ENCODE measurements at regions of chr2 and their contacts with region 1.

Region 1: DNA sequence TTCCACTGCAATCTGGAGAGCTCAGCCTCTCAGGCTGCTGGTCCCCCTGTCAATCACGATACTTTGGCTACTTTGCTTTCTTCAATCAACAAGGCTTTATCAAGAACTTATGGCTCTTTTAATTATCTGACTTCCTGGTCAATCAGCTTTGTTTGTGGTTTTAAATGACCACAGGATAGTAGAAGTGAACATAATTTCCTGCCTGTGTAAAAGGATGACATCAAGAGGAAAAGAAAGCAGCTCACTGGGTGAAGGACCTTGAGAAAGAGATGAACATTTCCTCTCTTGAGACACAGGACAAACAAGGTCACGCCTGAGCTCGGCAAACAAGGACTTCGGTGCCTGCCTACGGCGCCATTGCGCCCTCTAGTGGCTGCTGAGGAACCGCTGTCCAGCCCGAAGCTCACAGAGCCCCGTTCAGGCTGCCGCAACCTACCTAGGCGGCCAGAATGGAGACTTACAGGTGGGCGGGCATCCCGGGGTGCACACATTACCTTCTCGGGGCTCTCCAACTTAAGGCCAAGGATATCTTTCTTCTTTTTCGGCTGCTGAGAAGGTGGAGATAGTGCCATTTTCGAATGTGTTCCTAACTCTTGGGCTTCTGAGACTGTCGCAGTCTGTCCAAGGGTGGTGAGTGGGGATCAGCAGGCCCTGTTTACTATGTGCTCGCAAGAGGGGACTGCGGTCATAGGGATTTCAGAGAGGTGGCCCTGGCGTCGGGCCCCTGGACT is 54.0 kb downstream of the IL1RL2 start:
- DNase-seq: peak; percentile 92
- H3K4me3 ChIP-seq: no peak overlapping the region
- CTCF ChIP-seq: peak; percentile 99

Region 2: GRCh38 chr2:101644842-101645383 is 595.9 kb before region 1 on chr2:
- CTCF ChIA-PET with region 1: no interaction called
- POLR2A ChIA-PET with region 1: no interaction called
- DNase-seq: no peak
- H3K4me3 ChIP-seq: no peak overlapping the region
- CTCF ChIP-seq: no peak

Region 3: DNA sequence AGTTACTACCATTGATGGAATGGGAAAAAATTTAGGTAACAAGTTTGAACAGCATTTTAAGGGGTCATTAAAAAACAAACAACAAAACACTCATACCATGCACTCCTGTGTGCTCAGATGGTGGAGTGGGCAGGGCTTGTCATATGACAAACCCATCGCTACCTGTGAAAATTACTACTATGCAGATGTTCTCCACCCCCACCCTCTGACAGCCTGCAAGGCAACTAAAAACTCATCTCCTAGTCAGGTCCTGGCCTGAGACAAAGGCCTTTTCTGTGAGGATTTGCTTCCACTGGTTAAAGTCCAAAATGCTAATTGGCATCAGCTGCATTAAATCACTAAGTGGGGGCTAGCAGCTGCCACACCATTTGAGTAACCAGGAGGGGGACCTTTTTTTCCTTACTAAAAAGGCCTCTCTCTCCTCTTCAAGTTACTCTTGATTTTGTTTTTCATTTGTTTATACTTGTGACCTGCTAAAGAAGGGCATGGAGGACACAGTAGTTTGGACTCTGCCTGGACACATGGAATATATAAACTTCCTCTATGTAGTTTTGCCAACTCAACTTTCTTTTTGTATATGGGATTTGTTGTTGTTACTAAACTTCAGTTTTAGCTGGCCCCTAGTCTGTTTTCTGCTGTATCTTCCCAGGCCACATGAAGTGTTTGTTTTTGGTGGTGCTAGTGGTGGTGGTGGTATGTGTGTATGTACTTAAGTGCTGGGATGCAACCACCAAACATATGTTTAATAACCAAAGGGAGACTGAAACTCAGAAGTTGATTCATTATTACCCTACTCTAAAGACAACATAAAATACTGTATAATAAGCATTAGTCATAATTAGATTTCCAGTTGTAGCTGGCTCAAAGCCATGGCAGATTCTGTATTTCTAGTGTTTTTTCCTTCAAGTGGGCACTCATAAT is 422.0 kb before region 1 on chr2:
- CTCF ChIA-PET with region 1: no interaction called
- POLR2A ChIA-PET with region 1: no interaction called
- DNase-seq: peak; percentile 65
- H3K4me3 ChIP-seq: no peak overlapping the region
- CTCF ChIP-seq: no peak

Region 4: DNA sequence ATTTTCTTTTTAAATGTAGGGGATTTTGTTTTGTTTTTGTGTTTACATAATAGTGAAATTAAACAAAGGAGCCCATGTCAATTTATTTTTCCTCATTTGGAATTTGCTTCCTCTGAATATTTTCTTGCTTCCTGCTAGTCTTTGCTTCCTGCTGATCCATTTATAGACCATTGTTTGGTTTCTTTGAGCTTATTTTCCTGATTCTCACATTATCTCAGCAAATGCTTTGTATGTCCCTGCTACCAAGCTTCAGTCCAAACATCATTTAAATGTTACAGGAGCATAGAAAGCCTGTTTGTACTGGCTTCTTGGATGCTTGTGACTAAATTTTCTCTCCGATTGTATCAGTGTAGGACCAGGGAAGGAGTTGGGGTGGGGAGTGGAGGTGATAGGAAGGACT is 376.4 kb before region 1 on chr2:
- CTCF ChIA-PET with region 1: no interaction called
- POLR2A ChIA-PET with region 1: no interaction called
- DNase-seq: no peak
- H3K4me3 ChIP-seq: no peak overlapping the region
- CTCF ChIP-seq: no peak

Region 5: DNA sequence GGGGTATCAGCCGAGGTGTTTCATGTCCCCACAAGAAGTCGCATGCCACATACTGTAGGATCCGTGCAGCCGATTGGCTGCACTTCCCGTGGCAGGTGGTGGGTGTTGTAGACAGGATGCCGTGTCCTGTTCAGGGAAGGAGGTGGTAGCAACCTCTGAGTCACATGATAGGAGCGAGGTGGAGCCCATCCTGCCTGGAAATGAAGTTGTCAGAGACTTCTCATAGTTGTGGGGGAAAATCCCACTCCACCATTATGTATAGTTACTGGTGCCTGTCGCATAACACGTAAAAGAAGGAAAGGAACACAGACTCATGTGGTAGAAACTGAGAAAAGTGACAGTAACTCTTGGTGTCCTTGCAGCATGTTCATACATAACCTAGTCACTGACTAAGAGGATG is 340.4 kb before region 1 on chr2:
- CTCF ChIA-PET with region 1: interaction called, 10 read pairs
- POLR2A ChIA-PET with region 1: no interaction called
- DNase-seq: no peak
- H3K4me3 ChIP-seq: no peak overlapping the region
- CTCF ChIP-seq: no peak

Region 6: DNA sequence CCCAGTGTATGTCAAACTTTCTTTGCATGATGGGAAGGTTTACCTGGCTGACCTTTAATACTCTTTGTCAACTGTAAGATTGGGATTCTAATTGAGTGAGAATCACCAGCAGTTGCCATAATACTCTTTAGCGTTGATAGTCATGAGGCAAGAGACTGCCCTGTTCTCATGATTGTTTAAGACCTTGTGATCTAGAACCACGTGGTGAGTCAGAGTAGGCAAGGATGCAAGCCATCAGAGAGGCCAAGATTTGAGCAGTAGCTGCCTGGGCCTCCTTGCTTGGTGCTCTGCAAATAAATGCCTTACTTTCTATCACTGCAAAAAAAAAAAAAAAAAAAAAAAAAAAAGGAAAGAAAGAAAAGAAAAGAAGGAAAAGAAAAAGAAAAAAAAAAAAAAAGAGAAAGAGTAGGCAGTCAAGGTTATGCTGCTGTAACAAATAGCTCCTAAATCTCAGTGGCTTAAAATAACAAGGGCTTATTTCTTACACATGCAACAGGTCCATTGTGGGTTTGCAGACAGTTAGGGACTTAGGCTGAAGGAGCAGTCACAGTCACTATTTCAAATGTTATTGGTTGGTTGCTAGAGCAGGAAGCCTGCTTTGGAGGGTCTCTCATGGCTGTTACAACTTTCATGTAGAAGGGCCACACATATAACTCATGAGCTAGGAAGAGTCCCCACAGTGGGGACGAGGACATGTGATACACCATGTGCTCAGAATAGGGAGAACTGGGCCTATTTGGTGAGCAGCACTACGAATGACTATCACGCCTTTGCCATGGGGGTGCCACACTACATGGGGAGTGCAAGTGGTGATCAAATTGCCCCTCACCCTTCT is 227.4 kb before region 1 on chr2:
- CTCF ChIA-PET with region 1: interaction called, 145 read pairs
- POLR2A ChIA-PET with region 1: no interaction called
- DNase-seq: no peak
- H3K4me3 ChIP-seq: no peak overlapping the region
- CTCF ChIP-seq: no peak

Region 7: DNA sequence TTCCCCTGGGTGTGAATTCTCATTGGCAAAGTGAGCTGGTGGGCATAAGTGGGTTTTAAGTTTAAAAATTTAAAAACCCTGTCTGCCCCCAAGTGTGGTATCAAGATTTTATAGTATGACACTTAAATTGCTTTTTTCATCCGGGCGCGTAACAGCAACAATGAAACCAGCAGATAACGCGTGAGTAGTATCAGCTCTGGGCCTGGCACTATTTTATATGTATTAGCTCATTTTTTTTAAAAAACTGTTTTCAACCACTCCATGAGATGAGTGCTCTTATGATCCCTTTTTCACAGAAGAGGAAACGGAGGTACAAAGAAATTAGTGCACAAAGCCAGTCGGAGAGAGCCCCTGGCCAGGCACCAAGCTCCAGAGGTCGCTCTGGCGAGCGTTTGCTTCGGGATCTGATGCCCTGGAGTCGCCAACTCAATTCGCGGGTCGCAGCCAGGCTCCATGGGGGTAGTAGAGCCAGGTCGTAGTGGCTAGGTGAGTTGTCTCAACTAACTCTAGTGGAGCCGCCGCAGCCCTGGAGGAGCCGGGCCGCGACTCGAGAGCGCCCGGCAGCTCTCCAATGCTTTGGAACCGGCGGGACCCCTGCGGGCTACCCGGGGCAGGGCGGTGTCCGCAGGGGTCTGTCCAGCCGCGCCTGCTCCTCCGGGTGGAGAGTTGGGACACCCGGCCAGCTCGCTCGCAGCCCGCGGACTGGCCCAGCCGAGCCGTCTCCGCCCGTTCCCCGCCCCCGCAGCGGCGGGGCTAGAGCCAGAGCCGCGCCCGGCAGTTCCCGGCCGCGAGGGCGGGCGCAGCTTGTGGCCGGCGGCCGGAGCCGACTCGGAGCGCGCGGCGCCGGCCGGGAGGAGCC is 98.6 kb before region 1 on chr2 and contains the start of gene IL1R1:
- CTCF ChIA-PET with region 1: interaction called, 19 read pairs
- POLR2A ChIA-PET with region 1: no interaction called
- DNase-seq: no peak
- H3K4me3 ChIP-seq: peak within 1 kb of the TSS; percentile 69
- CTCF ChIP-seq: no peak

Region 8: DNA sequence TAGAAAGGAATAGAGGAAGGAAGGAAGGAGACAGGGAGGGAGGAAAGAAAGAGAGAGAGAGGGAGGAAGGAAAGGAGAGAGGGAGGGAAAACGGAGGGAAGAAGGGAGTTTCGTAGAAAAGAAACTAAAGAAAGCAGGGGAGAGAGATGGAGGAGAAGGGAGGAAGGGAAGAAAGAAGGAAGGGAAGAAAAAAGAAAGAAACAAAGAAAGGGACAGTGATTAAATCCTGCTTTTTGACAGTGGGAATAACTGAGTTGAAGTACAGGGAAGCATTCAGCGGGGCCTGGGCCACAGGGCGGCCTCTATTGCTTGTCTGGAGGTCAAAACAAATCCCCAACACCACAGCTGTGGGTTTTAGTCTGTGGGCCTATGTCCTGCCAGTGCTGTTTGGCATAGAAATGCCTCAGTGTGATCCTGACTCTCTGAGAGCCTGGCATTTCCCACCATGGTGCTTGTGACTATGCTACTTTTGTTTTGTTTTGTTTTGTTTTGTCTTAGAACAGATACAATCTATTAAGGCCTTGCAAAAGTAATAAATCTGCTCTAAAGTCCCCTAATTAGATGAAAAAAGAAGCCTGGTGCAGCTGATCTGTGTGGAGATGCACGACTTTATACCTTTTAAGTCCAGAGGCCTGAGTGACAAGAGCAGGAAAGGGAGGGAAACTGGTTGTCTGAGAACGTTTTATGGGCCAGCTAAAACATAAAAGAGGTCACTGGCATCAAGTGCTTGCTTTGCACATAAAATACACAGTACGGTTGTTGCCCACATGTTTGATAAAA is 14.0 kb before region 1 on chr2:
- CTCF ChIA-PET with region 1: interaction called, 18 read pairs
- POLR2A ChIA-PET with region 1: no interaction called
- DNase-seq: no peak
- H3K4me3 ChIP-seq: no peak overlapping the region
- CTCF ChIP-seq: no peak

Region 9: GRCh38 chr2:102442967-102443828 is 202.4 kb after region 1 on chr2:
- CTCF ChIA-PET with region 1: interaction called, 29 read pairs
- POLR2A ChIA-PET with region 1: no interaction called
- DNase-seq: no peak
- H3K4me3 ChIP-seq: no peak overlapping the region
- CTCF ChIP-seq: peak; percentile 41